A673 (cell line): ENCODE measurements at regions of chr3 and their contacts with region 1.

Region 1: DNA sequence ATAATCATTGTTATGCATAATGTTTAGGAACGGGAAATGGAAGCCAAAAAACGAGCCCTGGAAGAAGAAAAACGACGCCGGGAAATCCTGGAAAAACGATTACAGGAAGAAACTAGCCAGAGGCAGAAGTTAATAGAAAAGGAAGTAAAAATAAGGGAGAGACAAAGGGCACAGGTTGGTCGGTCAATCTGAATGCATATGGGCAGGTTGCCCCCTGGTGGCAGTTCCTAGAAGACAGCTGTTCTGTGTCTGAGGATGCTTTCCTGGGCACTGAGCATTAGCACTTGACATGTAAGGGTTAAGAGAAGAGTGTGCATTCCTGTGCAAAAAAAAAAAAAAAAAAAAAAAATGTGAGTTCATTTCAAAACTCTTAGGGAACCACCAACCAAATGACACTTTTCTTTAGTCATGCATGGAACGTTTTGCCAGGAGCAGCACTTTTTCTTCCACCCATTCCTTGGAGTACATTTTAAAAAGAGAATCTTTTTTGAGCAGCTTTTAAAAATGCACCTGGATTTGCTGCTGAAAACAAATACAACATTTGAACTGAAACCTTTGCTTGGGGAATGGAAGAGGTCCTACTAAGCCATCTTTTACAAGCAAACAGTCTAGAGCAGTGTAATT is 11.1 kb upstream of the ABHD10 start:
- DNase-seq: peak; percentile 83
- H3K4me3 ChIP-seq: no peak overlapping the region
- H3K27ac ChIP-seq: no peak overlapping the region
- H3K4me1 ChIP-seq: peaks cover 7% of the 10 kb centered on the region
- H3K27me3 ChIP-seq: no peaks in the 10 kb centered on the region
- CTCF ChIP-seq: peak; percentile 92

Region 2: GRCh38 chr3:111668912-111669488 is 298.8 kb before region 1 on chr3:
- CTCF ChIA-PET with region 1: no interaction called
- POLR2A ChIA-PET with region 1: no interaction called
- intact Hi-C with region 1: loop called (anchors 5 kb)
- DNase-seq: peak; percentile 70
- H3K4me3 ChIP-seq: no peak overlapping the region
- H3K27ac ChIP-seq: no peak overlapping the region
- H3K4me1 ChIP-seq: peaks cover 4% of the 10 kb centered on the region
- H3K27me3 ChIP-seq: no peaks in the 10 kb centered on the region
- CTCF ChIP-seq: peak; percentile 80

Region 3: GRCh38 chr3:111895079-111895478 is 72.7 kb before region 1 on chr3:
- CTCF ChIA-PET with region 1: interaction called, 26 read pairs
- POLR2A ChIA-PET with region 1: interaction called, 11 read pairs
- intact Hi-C with region 1: loop called (anchors 1 kb)
- DNase-seq: peak; percentile 79
- H3K4me3 ChIP-seq: no peak overlapping the region
- H3K27ac ChIP-seq: no peak overlapping the region
- H3K4me1 ChIP-seq: no peaks in the 10 kb centered on the region
- H3K27me3 ChIP-seq: no peaks in the 10 kb centered on the region
- CTCF ChIP-seq: peak; percentile 78